Activated CD4-positive, alpha-beta T cell treated with anti-CD3 and anti-CD28 coated beads for 36 hours (primary cell): ENCODE measurements at regions of chr19 and their contacts with region 1.

Region 1: GRCh38 chr19:52734893-52735661 is at the start of gene ZNF611:
- DNase-seq: peak; percentile 100
- ATAC-seq: peak; percentile 97
- H3K4me3 Mint-ChIP-seq: peak within 1 kb of the TSS; percentile 88
- H3K27ac Mint-ChIP-seq: peak within 1 kb of the TSS; percentile 89
- H3K4me1 Mint-ChIP-seq: peaks cover 24% of the 10 kb centered on the region
- H3K27me3 Mint-ChIP-seq: no peaks in the 10 kb centered on the region
- total RNA-seq, gene ZNF611: 20.6 to 22.9 TPM

Region 2: DNA sequence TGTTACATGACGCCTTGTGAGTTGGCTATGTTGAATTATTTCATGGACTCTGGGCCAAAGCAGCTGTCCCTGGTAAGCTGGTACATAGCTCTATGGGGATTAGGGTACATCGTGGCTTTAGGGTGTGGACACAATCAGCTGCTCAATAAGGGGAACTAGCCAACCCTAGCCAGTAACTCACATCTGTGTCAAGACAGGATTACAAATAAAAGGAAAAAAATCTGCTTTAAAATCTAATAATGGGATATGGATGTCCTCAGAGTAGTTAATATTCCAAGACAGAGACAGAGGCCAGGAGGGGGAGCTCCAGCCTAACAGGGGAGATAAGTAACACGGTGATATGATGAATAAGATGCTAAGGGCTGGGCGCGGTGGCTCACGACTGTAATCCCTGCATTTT is 486.8 kb before region 1 on chr19:
- CTCF ChIA-PET with region 1: no interaction called
- POLR2A ChIA-PET with region 1: interaction called, 14 read pairs
- intact Hi-C with region 1: no loop called
- DNase-seq: peak; percentile 82
- ATAC-seq: peak; percentile 93
- H3K4me3 Mint-ChIP-seq: no peak overlapping the region
- H3K27ac Mint-ChIP-seq: no peak overlapping the region
- H3K4me1 Mint-ChIP-seq: no peaks in the 10 kb centered on the region
- H3K27me3 Mint-ChIP-seq: no peaks in the 10 kb centered on the region

Region 3: DNA sequence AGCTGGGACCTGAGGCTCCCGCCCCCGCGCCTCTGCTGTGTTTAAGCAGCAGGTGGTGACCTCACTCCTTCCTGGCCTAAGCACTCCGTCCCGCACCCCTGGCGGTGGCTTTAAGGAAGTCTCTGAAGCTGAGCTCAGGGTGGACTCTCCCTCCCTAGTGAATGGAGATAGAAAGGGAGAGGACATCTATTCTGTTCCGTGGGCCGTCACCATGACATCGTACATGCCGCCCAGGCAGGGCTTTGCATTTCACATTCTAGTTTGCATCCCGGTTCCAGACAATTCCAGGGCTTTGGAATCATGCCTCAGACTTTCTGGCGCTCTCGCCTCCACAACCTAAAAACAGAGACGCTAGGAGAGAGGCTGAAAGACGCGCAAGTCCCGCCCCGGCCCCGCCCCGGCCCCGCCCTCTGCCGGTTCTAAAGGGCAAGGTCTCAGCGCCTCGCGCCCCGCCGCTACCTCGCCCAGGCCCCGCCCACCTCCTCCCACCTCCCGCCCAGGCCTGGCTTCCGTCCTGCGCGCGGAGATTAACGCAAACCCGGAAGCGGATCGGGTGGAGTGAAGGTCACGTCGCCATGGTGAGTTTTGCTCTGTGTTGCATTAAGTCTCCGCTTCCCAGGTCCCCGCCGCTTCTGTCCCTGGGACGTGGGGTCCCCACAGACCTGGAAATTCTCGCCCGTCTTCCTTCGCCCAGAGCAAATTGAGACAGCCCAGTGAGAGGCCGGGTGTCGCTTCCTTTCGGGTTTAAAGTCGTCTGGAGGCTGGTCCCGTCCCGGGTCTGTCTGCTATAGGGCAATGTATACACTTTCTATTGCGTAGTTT is 207.7 kb before region 1 on chr19 and contains the start of gene ZNF808:
- CTCF ChIA-PET with region 1: no interaction called
- POLR2A ChIA-PET with region 1: interaction called, 3 read pairs
- intact Hi-C with region 1: loop called in 1 of 2 experiments (anchors 2 kb)
- DNase-seq: peak; percentile 99
- ATAC-seq: peak; percentile 92
- H3K4me3 Mint-ChIP-seq: peak within 1 kb of the TSS; percentile 91
- H3K27ac Mint-ChIP-seq: peak within 1 kb of the TSS; percentile 94
- H3K4me1 Mint-ChIP-seq: peaks cover 23% of the 10 kb centered on the region
- H3K27me3 Mint-ChIP-seq: no peaks in the 10 kb centered on the region
- total RNA-seq, gene ZNF808: 25.7 to 29.9 TPM

Region 4: GRCh38 chr19:52601025-52601973 is 133.8 kb before region 1 on chr19:
- CTCF ChIA-PET with region 1: no interaction called
- POLR2A ChIA-PET with region 1: interaction called, 3 read pairs
- intact Hi-C with region 1: loop called in 1 of 2 experiments (anchors 1 kb)
- DNase-seq: peak; percentile 97
- ATAC-seq: peak; percentile 98
- H3K4me3 Mint-ChIP-seq: peak overlapping the region; percentile 86
- H3K27ac Mint-ChIP-seq: peak overlapping the region; percentile 83
- H3K4me1 Mint-ChIP-seq: peaks cover 26% of the 10 kb centered on the region
- H3K27me3 Mint-ChIP-seq: no peaks in the 10 kb centered on the region

Region 5: DNA sequence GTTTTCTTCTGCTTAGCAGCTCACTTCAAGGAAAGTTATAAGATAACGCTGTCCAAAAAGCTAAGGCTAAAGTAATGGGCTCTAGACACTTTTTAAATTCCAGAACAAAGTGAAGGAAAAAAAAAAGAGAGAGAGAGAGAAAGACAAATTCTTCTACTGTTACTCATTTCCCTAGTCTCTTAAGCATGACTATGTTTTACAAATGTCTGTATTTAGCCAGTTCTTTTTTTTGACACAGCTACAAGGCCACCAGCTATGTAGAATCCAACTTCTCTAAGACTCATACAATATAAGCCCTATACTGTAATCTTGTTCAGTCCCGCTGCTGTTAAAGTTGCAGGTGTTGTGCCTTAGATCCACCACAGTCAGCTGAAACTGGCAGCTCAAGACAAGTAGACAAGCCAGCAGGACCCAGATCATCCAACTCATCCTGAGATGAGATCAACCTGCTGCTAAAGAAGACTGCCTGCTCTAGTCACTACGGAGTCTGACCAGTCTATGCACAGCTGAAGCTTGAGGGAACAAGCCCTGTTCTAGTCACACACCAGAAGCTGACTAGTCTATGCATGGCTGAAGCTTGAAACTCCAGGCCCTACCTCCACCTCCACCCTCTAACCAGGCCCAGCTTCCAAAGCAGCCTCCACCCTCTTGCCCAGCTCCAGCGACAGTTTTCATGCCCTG is 86.6 kb before region 1 on chr19:
- CTCF ChIA-PET with region 1: no interaction called
- POLR2A ChIA-PET with region 1: no interaction called
- intact Hi-C with region 1: no loop called
- DNase-seq: no peak
- ATAC-seq: no peak
- H3K4me3 Mint-ChIP-seq: no peak overlapping the region
- H3K27ac Mint-ChIP-seq: no peak overlapping the region
- H3K4me1 Mint-ChIP-seq: no peaks in the 10 kb centered on the region
- H3K27me3 Mint-ChIP-seq: no peaks in the 10 kb centered on the region

Region 6: DNA sequence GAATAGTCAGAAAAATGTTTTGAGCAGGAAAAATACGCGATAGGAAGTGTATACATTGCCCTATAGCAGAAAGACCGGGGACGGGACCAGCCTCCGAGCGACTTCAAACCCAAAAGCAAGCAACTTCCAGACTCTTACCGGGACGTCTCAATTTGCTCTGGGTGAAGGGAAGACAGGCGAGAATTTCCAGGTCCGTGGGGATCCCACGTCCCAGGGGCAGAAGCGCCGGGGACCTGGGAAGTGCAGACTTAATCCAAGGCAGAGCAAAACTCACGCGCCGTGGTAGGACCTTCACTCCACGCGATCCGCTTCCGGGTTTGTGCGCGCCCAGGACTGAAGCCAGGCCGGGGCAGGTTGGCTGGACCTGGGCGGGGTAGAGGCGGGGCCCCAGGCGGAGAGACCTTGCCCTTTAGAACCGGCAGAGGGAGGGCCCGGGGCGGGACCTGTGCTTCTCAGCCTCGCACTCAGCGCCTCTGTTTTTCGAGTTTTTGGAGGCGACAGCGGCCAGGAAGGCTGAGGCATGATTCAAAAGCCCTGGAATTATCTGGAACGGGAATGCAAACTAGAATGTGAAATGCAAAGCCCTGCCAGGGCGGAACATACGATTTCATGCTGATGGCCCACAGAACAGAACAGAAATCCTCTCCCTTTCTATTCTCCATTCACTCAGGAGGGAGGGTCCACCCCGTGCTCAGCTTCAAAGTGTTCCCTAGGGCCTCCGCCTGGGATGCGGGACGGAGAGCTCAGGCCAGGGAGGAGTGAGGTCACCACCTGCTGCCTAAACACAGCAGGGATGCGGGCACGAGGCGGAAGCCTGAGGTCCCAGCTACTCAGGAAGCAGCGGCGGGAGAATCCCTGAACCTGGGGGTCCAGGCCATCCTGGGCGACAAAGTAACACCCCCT is 51.6 kb after region 1 on chr19 and contains the start of gene ZNF600:
- CTCF ChIA-PET with region 1: interaction called, 3 read pairs
- POLR2A ChIA-PET with region 1: no interaction called
- intact Hi-C with region 1: loop called in 1 of 2 experiments (anchors 1 kb)
- DNase-seq: peak; percentile 83
- ATAC-seq: peak; percentile 99
- H3K4me3 Mint-ChIP-seq: peak within 1 kb of the TSS; percentile 87
- H3K27ac Mint-ChIP-seq: peak within 1 kb of the TSS; percentile 84
- H3K4me1 Mint-ChIP-seq: peaks cover 23% of the 10 kb centered on the region
- H3K27me3 Mint-ChIP-seq: no peaks in the 10 kb centered on the region
- total RNA-seq, gene ZNF600: 10.6 to 14.3 TPM

Region 7: GRCh38 chr19:52922841-52923777 is 188.0 kb after region 1 on chr19 and contains the start of gene ZNF888:
- CTCF ChIA-PET with region 1: no interaction called
- POLR2A ChIA-PET with region 1: no interaction called
- intact Hi-C with region 1: loop called in 1 of 2 experiments (anchors 1 kb)
- DNase-seq: peak; percentile 96
- ATAC-seq: peak; percentile 100
- H3K4me3 Mint-ChIP-seq: peak within 1 kb of the TSS; percentile 89
- H3K27ac Mint-ChIP-seq: peak within 1 kb of the TSS; percentile 94
- H3K4me1 Mint-ChIP-seq: peaks cover 23% of the 10 kb centered on the region
- H3K27me3 Mint-ChIP-seq: no peaks in the 10 kb centered on the region
- total RNA-seq, gene ZNF888: 5.1 to 5.5 TPM

Region 8: DNA sequence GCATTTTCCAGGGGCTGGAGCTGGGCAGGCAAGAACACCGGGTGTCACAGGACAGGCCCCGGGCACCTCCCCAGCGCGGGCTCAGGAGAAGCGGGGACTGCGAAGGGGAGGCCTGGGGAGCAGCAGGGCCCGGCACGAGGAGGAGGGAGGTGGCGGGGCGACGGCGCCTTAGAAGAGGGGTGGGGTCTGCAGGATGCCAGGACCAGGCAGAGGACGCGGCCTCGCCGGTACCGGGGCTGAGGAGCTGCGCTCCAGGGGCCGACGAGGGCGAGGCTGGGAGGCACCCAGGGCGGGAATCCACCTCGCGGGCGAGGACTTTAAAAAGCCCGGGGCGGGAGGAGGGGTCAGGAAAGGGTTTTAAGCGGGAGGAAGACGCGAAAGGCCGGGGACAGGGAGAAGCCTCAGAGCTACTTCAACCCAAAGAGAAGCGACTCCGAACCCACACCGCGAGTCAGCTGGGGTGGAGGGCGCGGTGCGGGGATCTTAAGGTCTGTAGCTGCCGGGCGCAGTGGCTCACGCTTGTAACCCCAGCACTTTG is 423.1 kb after region 1 on chr19:
- CTCF ChIA-PET with region 1: no interaction called
- POLR2A ChIA-PET with region 1: no interaction called
- intact Hi-C with region 1: loop called in 1 of 2 experiments (anchors 1 kb)
- DNase-seq: peak; percentile 64
- ATAC-seq: peak; percentile 36
- H3K4me3 Mint-ChIP-seq: peak overlapping the region; percentile 72
- H3K27ac Mint-ChIP-seq: peak overlapping the region; percentile 74
- H3K4me1 Mint-ChIP-seq: peaks cover 14% of the 10 kb centered on the region
- H3K27me3 Mint-ChIP-seq: no peaks in the 10 kb centered on the region